HEK293T (cell line): ENCODE measurements at regions of chr1 and their contacts with region 1.

Region 1: GRCh38 chr1:234544087-234544579 is 65.2 kb upstream of the TARBP1 start:
- DNase-seq: peak; percentile 55

Region 2: GRCh38 chr1:234437423-234438171 is 106.5 kb before region 1 on chr1:
- CTCF ChIA-PET with region 1: no interaction called
- POLR2A ChIA-PET with region 1: no interaction called
- DNase-seq: no peak

Region 3: DNA sequence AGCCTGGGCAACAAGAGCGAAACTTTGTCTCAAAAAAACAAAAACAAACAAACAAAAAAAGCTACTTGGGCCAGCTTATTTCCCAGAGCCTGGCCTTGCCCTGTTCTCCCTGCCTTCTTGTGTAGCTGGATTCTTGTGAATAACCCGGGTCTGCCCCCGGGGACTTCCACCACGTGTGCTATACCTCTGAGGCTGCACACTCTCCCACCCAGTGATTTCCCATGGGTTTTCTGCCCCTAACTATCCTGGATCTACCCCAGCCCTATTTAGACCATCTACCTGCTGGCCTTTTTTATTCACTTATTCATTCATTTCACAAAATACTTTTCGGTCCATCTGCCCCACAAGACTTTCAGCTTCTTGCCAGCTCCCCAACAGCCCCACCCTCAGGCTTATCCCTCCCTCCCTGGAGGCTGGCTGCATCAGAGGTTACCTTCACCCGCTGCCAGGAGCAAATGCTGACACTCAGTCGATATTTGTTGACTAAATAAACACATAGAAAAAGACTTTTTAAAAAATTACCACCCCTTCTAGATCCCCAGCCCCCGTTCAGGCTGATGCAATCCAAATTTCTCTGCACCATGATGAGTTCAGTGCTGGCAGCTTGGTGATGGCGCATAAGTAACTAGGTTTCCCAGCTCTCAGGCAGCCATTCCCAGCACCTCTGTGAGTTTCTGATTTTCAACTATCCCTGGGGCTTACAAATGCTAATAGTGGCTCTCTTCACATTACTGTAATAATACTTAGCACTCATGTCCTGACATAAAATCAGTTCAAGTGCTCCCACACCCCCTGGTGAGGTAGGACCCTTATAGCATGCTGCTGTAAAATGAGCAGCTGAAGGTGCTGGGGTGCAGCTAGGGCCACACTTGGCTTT is 34.4 kb before region 1 on chr1:
- CTCF ChIA-PET with region 1: interaction called, 3 read pairs
- POLR2A ChIA-PET with region 1: interaction called, 23 read pairs
- DNase-seq: no peak

Region 4: DNA sequence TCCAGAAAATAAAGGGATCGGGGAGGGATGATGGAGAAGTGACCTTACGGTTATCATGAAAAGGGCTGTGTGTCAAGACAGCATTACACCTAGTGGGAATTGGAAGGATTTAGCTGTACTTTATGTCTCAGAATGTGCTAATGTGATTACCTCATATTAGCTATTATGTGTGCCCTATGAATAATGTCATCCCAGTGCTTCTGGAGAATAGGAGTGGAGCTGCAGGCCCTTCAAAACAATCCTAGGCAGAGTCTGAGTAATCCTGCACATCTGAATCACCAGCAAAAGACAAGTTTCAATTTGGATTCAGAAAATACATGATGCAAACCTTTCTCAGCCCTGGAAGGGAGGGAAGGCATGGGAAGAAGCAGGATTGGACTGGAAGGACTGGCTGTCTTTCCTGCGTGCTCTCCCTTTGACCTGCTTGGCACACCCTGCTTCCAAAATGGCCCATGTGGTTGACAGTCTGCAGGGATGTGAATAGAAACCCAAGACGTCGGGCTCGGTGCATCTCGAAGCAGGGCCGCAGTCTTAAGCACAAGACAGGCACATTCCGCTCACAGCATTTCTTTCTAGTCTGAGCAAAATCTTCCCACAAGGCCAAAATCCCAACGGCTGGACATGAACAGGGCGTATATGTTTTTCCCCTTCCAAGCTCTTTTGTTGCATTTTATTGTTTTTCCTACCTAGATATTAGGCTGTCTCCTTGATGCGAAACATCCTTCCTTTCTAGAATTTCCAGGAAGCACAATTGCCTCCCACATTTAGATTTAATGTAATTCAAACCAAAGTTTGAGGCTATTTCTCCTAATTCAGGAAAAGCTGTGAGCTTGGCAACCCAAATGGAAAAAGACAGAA is 10.9 kb before region 1 on chr1:
- CTCF ChIA-PET with region 1: interaction called, 5 read pairs
- POLR2A ChIA-PET with region 1: interaction called, 12 read pairs
- DNase-seq: no peak

Region 5: GRCh38 chr1:234599617-234600417 is 55.7 kb after region 1 on chr1:
- CTCF ChIA-PET with region 1: interaction called, 8 read pairs
- POLR2A ChIA-PET with region 1: interaction called, 18 read pairs
- DNase-seq: peak; percentile 74